ENCODE measurements at regions of chr18 and their contacts with region 1.

Region 1: GRCh38 chr18:34592961-34593382 is 117.1 kb upstream of the DTNA start:
- DNase-seq: peak; percentile 19
- H3K4me3 ChIP-seq: peak overlapping the region in 3 of 4 donors; percentile 6 to 31 (median 19)
- H3K27ac ChIP-seq: peak overlapping the region; percentile 65 to 80 (median 76)
- H3K4me1 ChIP-seq: peaks cover 0 to 10% (median 0%) of the 10 kb centered on the region in 4 donors
- H3K27me3 ChIP-seq: no peaks in the 10 kb centered on the region
- CTCF ChIP-seq: no peak
- EP300 ChIP-seq: no peak
- POLR2A ChIP-seq: no peak

Region 2: GRCh38 chr18:34493099-34493544 is 99.8 kb before region 1 on chr18:
- in situ Hi-C with region 1: no loop called
- intact Hi-C with region 1: loop called (anchors 10 kb)
- DNase-seq: peak; percentile 40
- H3K4me3 ChIP-seq: peak overlapping the region; percentile 36 to 55 (median 50)
- H3K27ac ChIP-seq: peak overlapping the region; percentile 48 to 76 (median 66)
- H3K4me1 ChIP-seq: peaks cover 0 to 7% (median 0%) of the 10 kb centered on the region in 4 donors
- H3K27me3 ChIP-seq: peaks cover 53% of the 10 kb centered on the region
- CTCF ChIP-seq: no peak
- EP300 ChIP-seq: no peak
- POLR2A ChIP-seq: no peak

Region 3: GRCh38 chr18:34576622-34577021 is 16.4 kb before region 1 on chr18:
- in situ Hi-C with region 1: no loop called
- intact Hi-C with region 1: no loop called
- DNase-seq: no peak
- H3K4me3 ChIP-seq: no peak overlapping the region
- H3K27ac ChIP-seq: no peak overlapping the region
- H3K4me1 ChIP-seq: no peaks in the 10 kb centered on the region
- H3K27me3 ChIP-seq: no peaks in the 10 kb centered on the region
- CTCF ChIP-seq: no peak
- EP300 ChIP-seq: no peak
- POLR2A ChIP-seq: no peak

Region 4: GRCh38 chr18:34659579-34660517 is 66.9 kb after region 1 on chr18:
- in situ Hi-C with region 1: no loop called
- intact Hi-C with region 1: no loop called
- DNase-seq: peak; percentile 73
- H3K4me3 ChIP-seq: no peak overlapping the region
- H3K27ac ChIP-seq: peak overlapping the region; percentile 50 to 70 (median 62)
- H3K4me1 ChIP-seq: peaks cover 0 to 21% (median 9%) of the 10 kb centered on the region in 4 donors
- H3K27me3 ChIP-seq: no peaks in the 10 kb centered on the region
- CTCF ChIP-seq: no peak
- EP300 ChIP-seq: no peak
- POLR2A ChIP-seq: no peak

Measured in transverse colon (tissue), 4 donors.